Left cardiac atrium (tissue), 4 donors: ENCODE measurements at regions of chr12 and their contacts with region 1.

Region 1: GRCh38 chr12:123271001-123271729 is 491 bp downstream of the CDK2AP1 start:
- DNase-seq: peak; percentile 79
- ATAC-seq: peak; percentile 24 to 62

Region 2: DNA sequence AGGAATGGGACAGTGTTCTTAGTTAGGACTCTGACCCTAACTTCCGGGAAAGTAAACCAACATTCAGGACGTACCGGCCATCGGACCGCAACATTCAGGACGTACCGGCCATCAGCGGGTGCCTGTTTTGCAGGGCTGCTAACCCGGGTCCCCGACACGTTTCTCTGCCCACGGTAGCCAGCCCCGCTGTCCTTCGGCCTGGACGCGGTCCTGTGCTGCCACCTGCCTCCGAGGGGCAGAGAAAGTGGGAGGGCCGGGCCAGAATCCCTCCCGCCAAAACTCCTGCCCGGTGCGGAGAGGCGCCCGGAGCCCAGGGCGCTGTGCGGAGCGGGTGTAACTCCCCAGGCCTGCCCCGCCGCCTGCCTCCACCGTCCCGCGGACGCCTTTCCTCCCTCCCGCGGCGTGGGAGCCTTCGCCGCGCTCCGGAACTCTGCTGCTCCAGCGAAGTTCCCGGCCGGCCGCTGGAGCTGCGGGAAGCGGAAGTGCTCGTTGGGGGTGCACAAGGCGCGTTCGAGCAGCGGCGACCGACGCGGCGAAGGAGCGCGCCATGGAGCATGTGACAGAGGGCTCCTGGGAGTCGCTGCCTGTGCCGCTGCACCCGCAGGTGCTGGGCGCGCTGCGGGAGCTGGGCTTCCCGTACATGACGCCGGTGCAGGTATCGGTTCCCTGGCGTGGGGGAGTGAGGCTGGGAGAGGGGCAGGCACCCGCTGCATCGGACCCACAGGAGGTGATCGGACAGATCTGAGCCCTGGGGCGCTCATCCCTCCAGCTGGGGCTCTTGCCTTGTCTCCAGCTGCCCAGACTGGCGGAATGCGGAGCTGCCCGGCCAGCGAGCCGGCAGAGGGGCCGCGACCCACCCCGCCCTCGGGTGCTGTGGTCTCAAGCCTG is 330.7 kb after region 1 on chr12 and contains the start of gene DDX55:
- intact Hi-C with region 1: loop called in 1 of 2 experiments (anchors 2 kb)
- DNase-seq: peak; percentile 87
- ATAC-seq: peak; percentile 98
- total RNA-seq, gene DDX55: 8.1 to 8.5 TPM

Region 3: GRCh38 chr12:123958462-123958861 is 687.3 kb after region 1 on chr12:
- intact Hi-C with region 1: no loop called
- DNase-seq: no peak
- ATAC-seq: peak; percentile 59 to 77